Left cardiac atrium (tissue), 4 donors: ENCODE measurements at regions of chr16 and their contacts with region 1.

Region 1: GRCh38 chr16:1677802-1678496 is at the start of gene JPT2:
- DNase-seq: peak; percentile 98
- ATAC-seq: peak; percentile 99
- total RNA-seq, gene JPT2: 29.1 to 35.3 TPM

Region 2: GRCh38 chr16:1610276-1611017 is 67.5 kb before region 1 on chr16:
- intact Hi-C with region 1: loop called in 1 of 2 experiments (anchors 10 kb)
- DNase-seq: peak; percentile 92
- ATAC-seq: peak; percentile 62 to 81